Activated naive CD8-positive, alpha-beta T cell treated with anti-CD3 and anti-CD28 coated beads, Interleukin-2, amount 10 ng/mL, durations not matched to agents 7 days and 5 days (primary cell): ENCODE measurements at regions of chr1 and their contacts with region 1.

Region 1: DNA sequence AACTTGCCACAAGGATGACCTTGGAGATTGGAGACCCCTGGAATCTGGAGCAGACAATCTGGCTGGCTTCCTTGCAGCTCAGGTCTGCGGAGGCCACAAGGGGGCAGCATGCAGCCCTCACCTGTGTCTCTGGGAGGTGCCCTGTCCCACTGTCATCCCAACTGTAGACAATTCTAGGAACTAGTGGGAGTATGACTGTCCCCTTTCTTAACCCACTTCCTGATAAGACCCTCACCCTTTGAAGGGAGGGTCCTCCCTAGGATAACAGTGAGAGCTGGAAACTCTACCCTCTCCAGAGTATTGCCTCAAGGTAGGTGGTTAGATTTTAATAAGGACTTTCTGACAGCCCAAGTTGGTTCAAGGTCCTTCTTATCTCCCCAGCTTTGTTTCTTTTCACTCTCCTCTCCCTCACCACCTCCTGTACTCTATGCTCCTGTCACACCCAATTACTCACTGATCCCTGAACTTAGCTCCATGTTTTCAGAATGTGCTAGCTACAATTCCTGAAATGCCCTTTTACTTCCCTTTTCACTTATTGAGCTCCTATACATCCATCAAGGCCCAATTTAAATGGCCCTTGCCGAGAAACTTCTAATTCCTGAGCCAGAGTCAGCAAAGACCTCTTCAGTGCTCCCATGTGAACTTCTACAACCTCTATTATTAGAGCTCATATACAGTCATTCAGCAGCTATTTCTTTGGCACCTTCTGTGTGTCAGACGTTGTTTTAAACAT is 9.2 kb upstream of the KCNQ4 start:
- DNase-seq: peak; percentile 78
- ATAC-seq: peak; percentile 62
- H3K4me3 Mint-ChIP-seq: no peak overlapping the region
- H3K27ac Mint-ChIP-seq: peak overlapping the region; percentile 18
- H3K4me1 Mint-ChIP-seq: peaks cover 28% of the 10 kb centered on the region
- H3K27me3 Mint-ChIP-seq: no peaks in the 10 kb centered on the region

Region 2: DNA sequence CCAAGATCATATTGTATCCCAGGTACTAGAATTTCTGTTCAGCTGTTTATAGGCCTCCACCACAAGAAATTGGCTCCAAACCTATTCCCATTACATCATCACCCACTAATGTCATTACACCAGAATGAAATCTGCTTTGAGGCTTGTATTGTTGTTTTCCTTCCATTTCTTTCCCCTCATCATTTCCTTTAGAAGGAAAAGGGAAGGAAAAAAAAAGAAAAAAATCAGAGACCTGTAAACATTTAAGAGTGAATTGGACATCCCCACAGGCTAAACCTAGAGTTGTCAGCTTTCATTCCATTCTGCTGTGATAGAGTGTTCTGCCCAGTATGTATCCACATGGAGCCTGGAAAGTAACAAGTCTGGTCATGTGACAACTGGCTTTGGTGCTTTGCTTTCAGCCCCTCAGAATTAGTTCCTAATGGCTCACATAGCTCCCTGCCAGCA is 38.3 kb before region 1 on chr1:
- POLR2A ChIA-PET with region 1: no interaction called
- DNase-seq: no peak
- ATAC-seq: no peak
- H3K4me3 Mint-ChIP-seq: no peak overlapping the region
- H3K27ac Mint-ChIP-seq: no peak overlapping the region
- H3K4me1 Mint-ChIP-seq: peaks cover 18% of the 10 kb centered on the region
- H3K27me3 Mint-ChIP-seq: no peaks in the 10 kb centered on the region

Region 3: GRCh38 chr1:40818264-40818961 is 44.0 kb after region 1 on chr1:
- POLR2A ChIA-PET with region 1: no interaction called
- DNase-seq: peak; percentile 92
- ATAC-seq: peak; percentile 93
- H3K4me3 Mint-ChIP-seq: peak overlapping the region; percentile 78
- H3K27ac Mint-ChIP-seq: peak overlapping the region; percentile 80
- H3K4me1 Mint-ChIP-seq: peaks cover 9% of the 10 kb centered on the region
- H3K27me3 Mint-ChIP-seq: no peaks in the 10 kb centered on the region

Region 4: DNA sequence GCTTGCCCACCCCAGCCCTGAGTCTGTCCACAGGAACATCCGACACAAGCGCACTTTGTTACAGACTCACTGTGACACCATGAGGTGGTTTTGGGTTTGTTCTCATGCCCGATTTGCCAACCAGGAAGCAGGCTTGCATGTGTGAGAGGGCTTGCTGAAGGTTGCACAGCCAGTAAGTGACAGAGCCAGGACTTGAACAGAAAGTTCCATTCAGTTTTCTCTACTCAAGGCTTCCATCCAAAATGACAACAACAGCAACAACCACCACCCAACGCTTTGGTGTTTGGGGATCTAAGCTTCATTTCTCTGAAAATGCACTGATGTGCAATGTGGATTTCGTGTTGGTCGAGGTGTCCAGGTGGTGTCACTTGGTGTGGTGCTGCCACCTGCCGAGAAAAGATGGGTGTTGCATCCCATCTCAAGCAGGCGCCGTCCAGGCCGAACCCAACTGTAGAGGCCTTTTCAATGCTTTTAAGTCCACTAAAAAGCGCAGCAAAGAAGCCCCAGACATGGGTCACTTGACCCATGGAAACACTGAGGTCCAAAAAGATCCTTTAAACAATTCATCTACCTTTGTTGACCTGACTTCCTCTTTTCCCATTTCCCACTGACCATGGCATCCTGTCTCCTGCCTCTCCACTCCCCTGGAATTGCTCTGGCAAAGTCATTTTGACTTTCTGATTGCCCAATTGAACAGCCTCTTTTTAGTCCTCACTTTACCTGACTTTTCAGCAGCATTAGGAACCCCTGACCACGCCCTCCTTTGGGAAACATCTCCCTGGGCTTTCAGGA is 75.6 kb after region 1 on chr1:
- POLR2A ChIA-PET with region 1: interaction called, 15 read pairs
- DNase-seq: peak; percentile 83
- ATAC-seq: peak; percentile 87
- H3K4me3 Mint-ChIP-seq: peak overlapping the region; percentile 62
- H3K27ac Mint-ChIP-seq: peak overlapping the region; percentile 86
- H3K4me1 Mint-ChIP-seq: peaks cover 14% of the 10 kb centered on the region
- H3K27me3 Mint-ChIP-seq: no peaks in the 10 kb centered on the region